HepG2 (cell line): ENCODE measurements at regions of chr1 and their contacts with region 1.

Region 1: DNA sequence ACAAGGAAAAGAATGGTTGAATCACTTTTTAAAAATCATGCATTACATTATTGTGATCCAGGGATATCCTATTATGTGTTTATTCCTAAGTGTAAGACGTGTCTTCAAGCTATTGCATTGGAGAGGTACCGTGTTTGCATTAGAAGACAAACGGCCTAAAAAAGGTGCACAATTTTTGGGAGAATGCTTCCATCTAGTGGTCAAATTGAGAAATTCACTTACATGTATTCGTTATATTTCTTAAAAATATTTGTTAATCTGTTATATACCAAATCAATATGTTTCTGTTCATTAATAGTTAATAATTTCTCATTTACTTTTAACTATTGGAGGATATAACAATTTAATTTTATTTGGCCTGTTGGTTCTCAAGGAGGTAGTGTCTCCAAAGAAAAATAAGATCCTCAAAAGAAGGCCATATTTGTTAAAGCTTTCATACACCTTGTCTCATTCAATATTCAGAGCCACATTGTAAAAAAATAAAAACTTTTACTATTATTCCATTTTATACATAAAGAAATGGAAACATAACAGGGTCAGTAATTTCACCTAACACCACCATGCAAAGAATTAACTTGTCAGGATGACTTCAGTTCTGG is 40.5 kb upstream of the KCTD3 start:
- DNase-seq: peak; percentile 45
- ATAC-seq: peak; percentile 56
- H3K4me3 ChIP-seq: no peak overlapping the region
- H3K27ac ChIP-seq: no peak overlapping the region
- H3K4me1 ChIP-seq: no peaks in the 10 kb centered on the region
- H3K27me3 ChIP-seq: no peaks in the 10 kb centered on the region
- CTCF ChIP-seq: peak; percentile 70
- EP300 ChIP-seq: no peak
- POLR2A ChIP-seq: no peak
- RAD21 ChIP-seq: peak; percentile 52

Region 2: DNA sequence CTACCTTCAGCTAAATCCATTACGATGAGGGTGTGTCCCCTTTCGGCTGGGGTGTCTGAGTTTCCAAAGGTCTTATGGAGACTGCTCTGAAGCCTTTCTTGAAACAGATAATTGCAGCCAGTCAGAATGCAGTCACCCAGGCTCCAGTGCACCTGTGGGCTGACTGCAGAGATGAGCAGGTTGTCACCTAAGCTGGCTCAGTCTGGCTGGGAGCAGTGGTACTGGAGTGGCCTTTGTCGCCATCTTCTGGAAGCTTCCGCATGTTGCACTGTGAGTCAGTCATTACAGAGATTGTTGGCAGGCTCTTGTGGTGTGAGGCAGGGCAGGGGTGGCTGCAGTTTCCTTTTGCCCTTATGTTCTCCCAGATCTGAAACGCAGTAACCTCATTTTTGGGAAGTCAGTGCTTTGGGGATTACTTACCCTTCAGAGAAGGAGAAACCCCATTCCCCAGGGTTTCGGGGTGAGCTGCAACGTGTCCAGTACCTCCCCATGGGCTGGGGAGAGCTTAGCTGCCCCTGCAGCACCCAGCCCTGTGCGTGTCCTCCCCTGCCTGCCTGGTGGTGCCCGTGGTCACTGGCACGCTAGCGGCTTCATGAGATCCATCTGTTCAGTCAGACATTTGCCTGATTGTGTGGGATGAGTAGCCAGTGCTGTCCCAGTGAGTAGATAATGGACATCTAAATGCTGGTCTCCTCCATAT is 1197.7 kb before region 1 on chr1:
- CTCF ChIA-PET with region 1: no interaction called
- POLR2A ChIA-PET with region 1: no interaction called
- in situ Hi-C with region 1: no loop called
- intact Hi-C with region 1: loop called (anchors 10 kb)
- DNase-seq: peak; percentile 65
- ATAC-seq: peak; percentile 91
- H3K4me3 ChIP-seq: no peak overlapping the region
- H3K27ac ChIP-seq: no peak overlapping the region
- H3K4me1 ChIP-seq: no peaks in the 10 kb centered on the region
- H3K27me3 ChIP-seq: no peaks in the 10 kb centered on the region
- CTCF ChIP-seq: peak; percentile 95
- EP300 ChIP-seq: no peak
- POLR2A ChIP-seq: no peak
- RAD21 ChIP-seq: peak; percentile 96

Region 3: DNA sequence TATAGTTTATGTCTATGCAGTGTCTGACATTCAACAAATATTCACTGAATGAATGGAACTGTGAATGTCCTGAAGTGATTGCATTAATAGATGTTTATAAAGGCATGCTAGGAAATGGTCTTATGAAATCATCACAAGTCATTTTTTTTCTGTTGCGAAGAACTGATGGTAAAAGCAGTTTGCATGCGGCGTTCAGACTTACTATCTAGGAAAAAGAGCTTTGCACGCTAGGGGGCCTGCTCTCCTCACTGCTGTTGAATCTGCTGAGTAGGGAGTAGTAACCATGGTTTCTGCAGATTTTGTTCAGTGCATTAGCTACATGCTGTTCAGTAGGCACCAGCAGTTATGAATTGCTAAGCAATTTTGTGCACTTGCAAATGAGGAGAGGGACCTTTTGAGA is 865.8 kb before region 1 on chr1:
- CTCF ChIA-PET with region 1: interaction called, 9 read pairs
- POLR2A ChIA-PET with region 1: no interaction called
- in situ Hi-C with region 1: loop called (anchors 10 kb)
- intact Hi-C with region 1: no loop called
- DNase-seq: peak; percentile 6
- ATAC-seq: peak; percentile 78
- H3K4me3 ChIP-seq: no peak overlapping the region
- H3K27ac ChIP-seq: no peak overlapping the region
- H3K4me1 ChIP-seq: no peaks in the 10 kb centered on the region
- H3K27me3 ChIP-seq: no peaks in the 10 kb centered on the region
- CTCF ChIP-seq: peak; percentile 61
- EP300 ChIP-seq: no peak
- POLR2A ChIP-seq: no peak
- RAD21 ChIP-seq: peak; percentile 31; the same call in 1 of the 2 replicates

Region 4: GRCh38 chr1:214816603-214817002 is 710.0 kb before region 1 on chr1:
- CTCF ChIA-PET with region 1: no interaction called
- POLR2A ChIA-PET with region 1: no interaction called
- in situ Hi-C with region 1: loop called (anchors 10 kb)
- intact Hi-C with region 1: loop called (anchors 5 kb)
- DNase-seq: no peak
- ATAC-seq: no peak
- H3K4me3 ChIP-seq: no peak overlapping the region
- H3K27ac ChIP-seq: no peak overlapping the region
- H3K4me1 ChIP-seq: no peaks in the 10 kb centered on the region
- H3K27me3 ChIP-seq: no peaks in the 10 kb centered on the region
- CTCF ChIP-seq: no peak
- EP300 ChIP-seq: no peak
- POLR2A ChIP-seq: no peak
- RAD21 ChIP-seq: no peak

Region 5: DNA sequence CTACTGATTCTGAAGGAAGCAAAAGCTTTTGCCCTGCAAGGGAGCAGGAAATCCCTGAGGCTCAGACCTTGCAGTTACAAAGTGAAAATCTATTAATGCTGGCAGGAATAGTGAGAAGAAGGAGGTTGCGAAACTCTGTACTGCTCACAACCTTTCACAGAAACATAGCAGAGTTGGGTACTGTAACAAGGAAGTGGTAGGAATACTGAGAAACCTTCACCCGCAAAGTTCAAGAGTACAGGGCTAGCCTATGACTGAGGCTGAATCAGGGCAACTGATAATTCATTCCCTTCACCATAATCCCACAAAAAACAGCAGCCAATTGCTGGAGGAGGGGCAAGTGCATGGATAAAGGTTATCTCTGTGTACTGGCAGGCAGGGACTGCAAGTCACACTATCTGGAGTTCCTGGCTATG is 16.5 kb after region 1 on chr1:
- CTCF ChIA-PET with region 1: no interaction called
- POLR2A ChIA-PET with region 1: no interaction called
- in situ Hi-C with region 1: no loop called
- intact Hi-C with region 1: no loop called
- DNase-seq: peak; percentile 20
- ATAC-seq: peak; percentile 78
- H3K4me3 ChIP-seq: peak overlapping the region in 1 of 3 experiments; percentile 26; a peak in 1 of 6 replicates
- H3K27ac ChIP-seq: no peak overlapping the region
- H3K4me1 ChIP-seq: peaks cover 10% of the 10 kb centered on the region
- H3K27me3 ChIP-seq: no peaks in the 10 kb centered on the region
- CTCF ChIP-seq: no peak
- EP300 ChIP-seq: no peak
- POLR2A ChIP-seq: no peak
- RAD21 ChIP-seq: no peak

Region 6: DNA sequence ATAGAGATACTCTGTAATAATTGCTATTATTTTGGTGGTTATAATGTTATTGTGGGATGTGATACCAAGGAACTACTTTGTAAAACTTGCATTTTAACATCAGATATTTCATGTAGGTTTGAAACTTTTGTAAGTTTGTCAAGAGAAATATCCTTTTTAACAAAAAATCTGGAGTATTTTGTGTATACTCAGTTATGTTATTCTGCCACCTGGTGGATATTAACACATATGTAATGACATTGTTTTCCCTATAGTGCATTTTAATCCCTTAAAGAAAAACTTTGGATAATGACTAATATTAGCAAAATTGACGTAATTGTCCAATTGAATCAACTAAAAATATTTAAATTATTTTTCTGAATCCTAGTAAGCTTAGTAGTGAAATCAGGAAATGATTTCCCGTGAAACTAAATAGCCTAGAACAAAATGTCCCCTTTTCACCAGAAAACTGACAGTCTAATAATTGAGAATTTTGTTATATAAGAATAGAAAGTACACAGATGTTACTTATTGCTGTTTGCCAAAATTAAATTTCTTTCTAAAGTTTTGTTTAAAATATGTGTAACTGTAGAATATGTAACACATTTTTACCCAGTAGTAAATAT is 80.0 kb after region 1 on chr1:
- CTCF ChIA-PET with region 1: no interaction called
- POLR2A ChIA-PET with region 1: no interaction called
- in situ Hi-C with region 1: no loop called
- intact Hi-C with region 1: loop called (anchors 5 kb)
- DNase-seq: no peak
- ATAC-seq: peak; percentile 48; the same call in 2 of the 3 replicates
- H3K4me3 ChIP-seq: no peak overlapping the region
- H3K27ac ChIP-seq: no peak overlapping the region
- H3K4me1 ChIP-seq: peaks cover 26% of the 10 kb centered on the region
- H3K27me3 ChIP-seq: no peaks in the 10 kb centered on the region
- CTCF ChIP-seq: peak; percentile 36
- EP300 ChIP-seq: no peak
- POLR2A ChIP-seq: no peak
- RAD21 ChIP-seq: no peak

Region 7: DNA sequence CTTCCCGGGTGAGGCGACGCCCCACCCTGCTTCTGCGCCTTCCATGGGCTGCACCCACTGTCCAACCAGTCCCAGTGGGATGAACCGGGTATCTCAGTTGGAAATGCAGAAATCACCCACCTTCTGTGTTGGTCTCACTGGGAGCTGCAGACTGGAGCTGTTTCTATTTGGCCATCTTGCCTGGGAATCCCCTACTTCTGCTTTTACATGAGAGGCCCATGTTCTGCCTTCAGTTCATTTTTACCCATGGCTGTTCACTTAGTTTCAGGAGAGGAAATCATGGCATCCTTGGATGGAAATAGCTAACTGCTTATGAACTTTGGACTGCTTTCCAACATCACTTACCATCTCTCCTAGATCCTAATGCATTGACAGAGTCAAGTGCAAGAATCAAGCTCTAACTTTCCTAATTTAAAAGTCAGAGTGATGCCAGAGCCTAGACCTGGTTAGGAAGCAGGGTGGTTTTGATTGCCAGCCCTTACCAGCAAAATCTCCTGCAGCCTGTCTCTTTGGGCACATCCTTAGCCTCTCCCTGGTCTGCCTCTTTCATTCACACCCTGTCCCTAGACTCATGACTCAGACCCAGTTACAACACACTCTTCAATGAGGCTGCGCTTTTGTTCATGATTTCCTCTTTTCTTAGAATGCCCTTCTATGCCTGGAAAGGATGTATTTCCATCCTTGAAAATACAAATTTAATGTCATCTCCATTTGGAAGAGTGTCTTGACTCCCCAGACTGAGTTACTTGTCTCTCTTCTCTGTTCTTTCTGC is 177.6 kb after region 1 on chr1:
- CTCF ChIA-PET with region 1: no interaction called
- POLR2A ChIA-PET with region 1: no interaction called
- in situ Hi-C with region 1: no loop called
- intact Hi-C with region 1: no loop called
- DNase-seq: no peak
- ATAC-seq: no peak
- H3K4me3 ChIP-seq: no peak overlapping the region
- H3K27ac ChIP-seq: no peak overlapping the region
- H3K4me1 ChIP-seq: no peaks in the 10 kb centered on the region
- H3K27me3 ChIP-seq: no peaks in the 10 kb centered on the region
- CTCF ChIP-seq: no peak
- EP300 ChIP-seq: no peak
- POLR2A ChIP-seq: no peak
- RAD21 ChIP-seq: no peak